Activated CD4-positive, alpha-beta T cell treated with anti-CD3 and anti-CD28 coated beads, Interleukin-2, amount 10 ng/mL, durations not matched to agents 24 days and 14 days (primary cell): ENCODE measurements at regions of chr3 and their contacts with region 1.

Region 1: DNA sequence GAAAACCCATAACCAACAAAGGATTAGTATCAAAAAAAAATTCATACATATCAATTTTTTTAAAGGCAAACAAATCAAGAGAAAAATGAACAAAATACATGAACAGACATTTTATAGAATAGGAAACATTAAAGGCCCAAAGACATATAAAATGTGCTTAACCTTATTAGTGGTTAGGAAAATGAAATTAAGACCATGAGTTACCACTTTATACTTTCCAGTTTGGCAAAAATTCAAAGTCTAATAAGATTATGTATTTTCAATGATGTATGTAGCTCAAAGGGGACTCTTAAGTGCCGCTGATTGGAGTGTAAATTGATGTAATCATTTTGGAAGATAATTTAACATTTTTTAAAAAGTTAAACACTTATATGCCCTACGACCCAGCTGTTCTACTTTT is 89.2 kb downstream of the BOC start:
- DNase-seq: no peak
- H3K4me3 Mint-ChIP-seq: no peak overlapping the region
- H3K27ac Mint-ChIP-seq: no peak overlapping the region
- H3K4me1 Mint-ChIP-seq: no peaks in the 10 kb centered on the region
- H3K27me3 Mint-ChIP-seq: no peaks in the 10 kb centered on the region

Region 2: DNA sequence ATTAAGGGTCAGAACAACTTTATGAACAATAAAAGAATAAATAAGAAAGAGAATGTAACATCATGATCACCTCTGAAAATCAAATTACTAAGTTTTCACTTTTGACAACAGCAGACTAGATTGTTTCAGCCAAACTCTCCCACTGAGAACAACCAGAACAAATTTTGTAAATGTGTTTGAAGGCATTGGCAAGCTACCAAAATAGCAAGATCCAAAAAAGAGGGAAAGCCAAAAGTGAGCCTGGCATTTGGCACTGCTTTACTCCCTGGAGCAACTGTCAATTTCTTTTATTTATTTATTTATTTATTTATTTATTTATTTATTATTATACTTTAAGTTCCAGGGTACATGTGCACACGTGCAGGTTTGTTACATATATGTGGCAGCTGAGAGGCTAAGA is 73.5 kb after region 1 on chr3:
- intact Hi-C with region 1: loop called (anchors 2 kb)
- DNase-seq: no peak
- H3K4me3 Mint-ChIP-seq: no peak overlapping the region
- H3K27ac Mint-ChIP-seq: no peak overlapping the region
- H3K4me1 Mint-ChIP-seq: no peaks in the 10 kb centered on the region
- H3K27me3 Mint-ChIP-seq: no peaks in the 10 kb centered on the region

Region 3: GRCh38 chr3:113441051-113441770 is 140.6 kb after region 1 on chr3 and contains the start of gene CFAP44:
- intact Hi-C with region 1: no loop called
- DNase-seq: peak; percentile 86
- H3K4me3 Mint-ChIP-seq: peak within 1 kb of the TSS; percentile 30
- H3K27ac Mint-ChIP-seq: no peak within 1 kb of the TSS
- H3K4me1 Mint-ChIP-seq: no peaks in the 10 kb centered on the region
- H3K27me3 Mint-ChIP-seq: no peaks in the 10 kb centered on the region
- total RNA-seq, gene CFAP44: 2.5 and 2.7 TPM in 2 replicates

Region 4: DNA sequence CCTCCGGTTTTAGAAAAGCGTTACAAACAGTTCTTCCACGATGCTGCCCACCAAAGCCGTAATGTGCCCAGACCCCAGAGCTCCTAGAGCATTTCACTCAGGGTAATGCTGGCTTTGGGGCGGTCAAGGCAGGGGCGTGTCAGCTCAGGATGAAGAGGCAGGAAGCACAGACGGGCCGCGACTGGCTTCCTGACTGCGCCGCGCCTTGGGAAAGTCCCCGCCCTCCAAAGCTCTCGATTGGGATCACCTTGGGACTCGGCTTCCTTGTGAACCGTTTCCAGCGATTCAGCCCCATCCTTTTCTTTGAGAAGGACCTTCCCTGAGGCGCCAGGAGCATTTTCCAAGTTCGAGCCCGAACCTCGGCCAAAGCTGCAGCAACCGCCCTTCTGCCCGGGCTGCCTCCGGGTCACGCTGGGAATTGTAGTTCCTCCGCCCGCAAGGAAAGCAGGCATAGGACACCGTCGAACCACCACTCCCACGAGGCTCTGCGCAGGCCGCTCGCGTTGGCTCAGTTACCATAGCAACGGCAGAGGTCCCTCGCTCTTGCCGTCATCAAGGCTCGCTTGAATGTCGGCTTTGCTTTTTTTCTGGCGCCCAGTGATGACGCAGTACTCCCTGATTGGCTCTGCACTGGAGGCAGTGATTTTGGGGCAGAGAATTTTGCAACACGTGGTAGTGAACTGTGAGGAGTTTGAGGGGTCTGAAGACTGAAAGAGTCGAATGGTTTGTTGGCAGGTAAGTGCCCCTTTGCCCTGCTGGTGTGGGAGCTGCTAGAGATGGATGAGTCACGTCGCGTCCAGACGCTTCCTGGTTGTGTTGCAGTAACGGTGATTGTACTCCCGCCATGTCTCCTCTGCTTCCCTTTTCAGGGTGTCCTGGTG is 755.8 kb after region 1 on chr3 and contains the starts of genes CCDC191 and QTRT2:
- intact Hi-C with region 1: no loop called
- DNase-seq: peak; percentile 100
- H3K4me3 Mint-ChIP-seq: peak within 1 kb of the TSS; percentile 93
- H3K27ac Mint-ChIP-seq: peak within 1 kb of the TSS; percentile 95
- H3K4me1 Mint-ChIP-seq: peaks cover 30% of the 10 kb centered on the region
- H3K27me3 Mint-ChIP-seq: peaks cover 2% of the 10 kb centered on the region
- total RNA-seq, gene CCDC191: 0.66 and 1.7 TPM in 2 replicates
- total RNA-seq, gene QTRT2: 50.5 and 55.3 TPM in 2 replicates